ENCODE measurements at regions of chr16 and their contacts with region 1.

Region 1: DNA sequence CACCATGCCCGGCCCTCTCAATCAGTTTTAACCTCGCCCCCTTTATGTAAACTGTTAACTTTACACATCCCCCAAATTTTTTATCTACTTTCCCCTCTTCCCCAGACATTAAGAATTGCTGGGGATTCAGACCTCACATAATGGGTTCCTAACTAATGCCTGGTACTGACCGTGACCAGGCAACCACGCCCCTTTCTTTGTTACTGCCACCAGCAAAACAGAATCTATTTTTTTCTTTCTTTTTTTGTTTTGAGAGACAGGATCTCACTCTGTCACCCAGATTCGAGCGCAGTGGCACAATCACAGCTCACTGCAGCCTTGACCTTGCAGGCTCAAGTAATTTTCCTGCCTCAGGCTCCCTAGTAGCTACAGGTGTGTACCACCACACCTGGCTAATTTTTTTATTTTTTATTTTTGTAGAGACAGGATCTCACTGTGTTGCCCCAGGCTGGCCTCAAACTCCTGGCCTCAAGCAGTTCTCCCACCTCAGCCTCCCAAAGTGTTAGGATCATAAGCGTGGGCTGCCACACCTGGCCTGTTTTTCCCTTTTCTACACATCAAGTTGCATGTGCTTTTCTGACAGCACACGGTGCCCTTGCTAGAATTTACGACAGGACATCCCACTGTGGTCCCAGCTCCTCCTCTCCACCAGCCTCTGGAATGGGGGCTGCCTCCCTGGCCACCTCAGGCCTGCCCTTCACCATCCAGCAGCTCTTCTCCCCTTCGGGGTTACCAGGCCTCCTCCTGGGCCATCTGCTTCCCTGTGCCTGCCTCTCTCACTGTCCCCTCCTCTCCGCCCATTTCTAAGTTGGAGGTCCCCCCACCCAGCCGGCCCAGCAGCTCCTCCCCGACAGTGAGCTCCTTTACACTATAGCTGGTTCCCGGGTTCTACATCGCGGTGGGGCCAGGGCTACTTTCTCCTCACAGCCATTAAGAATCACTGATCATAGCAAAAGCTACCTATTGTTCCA is 10.8 kb downstream of the CPNE2 start:
- DNase-seq: no peak
- H3K4me3 Mint-ChIP-seq: no peak overlapping the region
- H3K27ac Mint-ChIP-seq: peak overlapping the region; percentile 36
- H3K4me1 Mint-ChIP-seq: peaks cover 25% of the 10 kb centered on the region
- H3K27me3 Mint-ChIP-seq: no peaks in the 10 kb centered on the region

Region 2: GRCh38 chr16:57084257-57084770 is 18.9 kb before region 1 on chr16:
- CTCF ChIA-PET with region 1: interaction called, 10 read pairs
- POLR2A ChIA-PET with region 1: no interaction called
- DNase-seq: peak; percentile 77
- H3K4me3 Mint-ChIP-seq: no peak overlapping the region
- H3K27ac Mint-ChIP-seq: peak overlapping the region; percentile 68
- H3K4me1 Mint-ChIP-seq: peaks cover 9% of the 10 kb centered on the region
- H3K27me3 Mint-ChIP-seq: no peaks in the 10 kb centered on the region

Measured in activated CD4-positive, alpha-beta T cell treated with anti-CD3 and anti-CD28 coated beads, Interleukin-2, amount 10 ng/mL, durations not matched to agents 7 days and 5 days (primary cell).